ENCODE measurements at regions of chr1 and their contacts with region 1.

Region 1: GRCh38 chr1:107963601-107964335 is 1.2 kb downstream of the VAV3 start:
- DNase-seq: peak; percentile 21
- H3K4me3 ChIP-seq: peak overlapping the region; percentile 13 to 59 (median 56)
- H3K27ac ChIP-seq: no peak overlapping the region
- H3K4me1 ChIP-seq: peaks cover 26% of the 10 kb centered on the region
- H3K27me3 ChIP-seq: no peaks in the 10 kb centered on the region
- CTCF ChIP-seq: no peak

Region 2: GRCh38 chr1:107914134-107914765 is 49.5 kb before region 1 on chr1:
- CTCF ChIA-PET with region 1: no interaction called
- dilution Hi-C with region 1: no loop called
- in situ Hi-C with region 1: no loop called
- intact Hi-C with region 1: no loop called
- DNase-seq: no peak
- H3K4me3 ChIP-seq: no peak overlapping the region
- H3K27ac ChIP-seq: no peak overlapping the region
- H3K4me1 ChIP-seq: no peaks in the 10 kb centered on the region
- H3K27me3 ChIP-seq: no peaks in the 10 kb centered on the region
- CTCF ChIP-seq: no peak

Region 3: GRCh38 chr1:108000620-108001111 is 36.9 kb after region 1 on chr1:
- CTCF ChIA-PET with region 1: no interaction called
- dilution Hi-C with region 1: no loop called
- in situ Hi-C with region 1: no loop called
- intact Hi-C with region 1: loop called (anchors 5 kb)
- DNase-seq: peak; percentile 72
- H3K4me3 ChIP-seq: no peak overlapping the region
- H3K27ac ChIP-seq: no peak overlapping the region
- H3K4me1 ChIP-seq: peaks cover 8% of the 10 kb centered on the region
- H3K27me3 ChIP-seq: no peaks in the 10 kb centered on the region
- CTCF ChIP-seq: no peak

Region 4: DNA sequence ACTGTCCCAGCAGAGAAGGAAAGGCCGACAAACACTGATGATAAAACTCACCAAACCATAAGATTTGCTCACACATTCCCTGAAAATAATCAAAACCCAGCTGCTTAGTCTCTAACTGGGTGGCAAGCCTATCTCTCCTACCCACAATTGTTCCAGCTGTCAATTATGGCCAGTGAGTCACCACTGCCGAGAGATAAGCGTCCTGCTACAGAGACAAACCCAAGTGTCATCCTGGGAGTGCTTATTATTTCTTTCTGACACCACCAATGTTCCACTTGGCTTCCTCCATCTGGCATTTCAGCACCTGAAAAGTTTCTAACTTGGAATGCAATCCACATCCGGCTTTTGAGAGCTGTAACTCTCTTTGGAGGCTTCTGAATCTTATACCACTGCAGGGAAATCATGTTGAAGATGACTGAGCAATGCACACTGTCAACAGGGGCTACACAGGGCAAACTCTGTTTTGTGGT is 52.7 kb after region 1 on chr1:
- CTCF ChIA-PET with region 1: no interaction called
- dilution Hi-C with region 1: no loop called
- in situ Hi-C with region 1: no loop called
- intact Hi-C with region 1: loop called (anchors 2 kb)
- DNase-seq: peak; percentile 71
- H3K4me3 ChIP-seq: no peak overlapping the region
- H3K27ac ChIP-seq: no peak overlapping the region
- H3K4me1 ChIP-seq: peaks cover 22% of the 10 kb centered on the region
- H3K27me3 ChIP-seq: no peaks in the 10 kb centered on the region
- CTCF ChIP-seq: no peak

Region 5: DNA sequence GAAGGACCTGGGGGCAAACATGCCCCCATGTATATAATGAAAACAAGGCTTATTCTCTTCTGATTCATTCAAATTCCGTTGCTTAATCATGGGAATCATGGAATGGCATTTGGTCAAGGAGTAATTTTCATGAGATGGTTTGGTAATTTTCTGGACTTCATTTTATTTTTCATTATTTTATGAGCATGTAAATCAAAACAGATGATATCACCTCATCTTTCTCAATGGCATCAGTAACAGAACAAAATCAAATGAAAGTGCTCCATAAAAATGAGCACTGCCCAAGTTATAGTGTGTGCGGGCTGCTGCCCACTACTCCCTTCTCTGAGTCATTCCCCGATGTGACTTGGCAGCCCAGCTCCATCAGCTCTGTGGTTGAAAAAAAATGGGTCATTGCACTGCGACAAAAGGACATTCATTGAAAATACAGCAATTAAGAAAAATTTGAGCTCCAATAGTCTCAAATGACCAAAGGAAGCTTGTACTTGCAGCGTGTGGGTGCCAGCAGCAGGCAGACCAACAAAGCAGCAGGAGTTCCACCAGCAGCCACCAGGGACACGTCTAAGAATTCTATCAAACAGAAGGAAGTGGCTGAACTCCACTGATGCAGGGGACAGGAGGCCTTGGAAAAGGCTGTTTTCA is 85.5 kb after region 1 on chr1:
- CTCF ChIA-PET with region 1: no interaction called
- dilution Hi-C with region 1: no loop called
- in situ Hi-C with region 1: no loop called
- intact Hi-C with region 1: loop called (anchors 5 kb)
- DNase-seq: peak; percentile 12
- H3K4me3 ChIP-seq: no peak overlapping the region
- H3K27ac ChIP-seq: no peak overlapping the region
- H3K4me1 ChIP-seq: peaks cover 33% of the 10 kb centered on the region
- H3K27me3 ChIP-seq: no peaks in the 10 kb centered on the region
- CTCF ChIP-seq: peak; percentile 46 to 62

Measured in mammary epithelial cell (primary cell).